ENCODE measurements at regions of chr6 and their contacts with region 1.

Region 1: DNA sequence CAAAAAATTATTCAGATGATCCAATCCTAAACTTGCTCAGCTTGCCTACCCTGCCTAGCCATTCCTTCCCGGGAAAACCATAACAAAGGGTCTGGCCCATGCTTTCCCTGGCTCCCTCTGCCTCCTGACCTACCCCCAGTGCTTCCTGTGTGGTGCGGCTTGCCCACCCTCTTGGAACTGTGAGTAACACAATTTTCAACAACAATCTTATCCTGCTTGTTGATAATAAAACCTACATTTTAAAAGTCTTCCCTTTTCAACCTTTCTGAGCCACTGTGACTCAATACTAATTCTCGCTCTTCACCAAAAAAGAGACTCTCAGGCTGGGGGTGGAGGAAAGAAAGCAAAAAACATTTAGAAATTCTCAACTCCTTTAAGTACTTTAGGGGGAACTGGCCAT is 18.0 kb downstream of the EXOC2 start:
- DNase-seq: no peak
- H3K4me3 ChIP-seq: no peak overlapping the region
- H3K27ac ChIP-seq: no peak overlapping the region
- H3K4me1 ChIP-seq: no peaks in the 10 kb centered on the region
- H3K27me3 ChIP-seq: no peaks in the 10 kb centered on the region
- CTCF ChIP-seq: no peak
- POLR2A ChIP-seq: no peak

Region 2: GRCh38 chr6:641225-641985 is 33.6 kb before region 1 on chr6:
- intact Hi-C with region 1: loop called (anchors 2 kb)
- DNase-seq: no peak
- H3K4me3 ChIP-seq: no peak overlapping the region
- H3K27ac ChIP-seq: no peak overlapping the region
- H3K4me1 ChIP-seq: no peaks in the 10 kb centered on the region
- H3K27me3 ChIP-seq: no peaks in the 10 kb centered on the region
- CTCF ChIP-seq: no peak
- POLR2A ChIP-seq: no peak

Region 3: GRCh38 chr6:710601-711571 is 35.9 kb after region 1 on chr6:
- intact Hi-C with region 1: no loop called
- DNase-seq: peak; percentile 34 to 57
- H3K4me3 ChIP-seq: peak overlapping the region; percentile 57 to 86 (median 64)
- H3K27ac ChIP-seq: peak overlapping the region; percentile 90 to 97
- H3K4me1 ChIP-seq: no peaks in the 10 kb centered on the region
- H3K27me3 ChIP-seq: no peaks in the 10 kb centered on the region
- CTCF ChIP-seq: no peak
- POLR2A ChIP-seq: no peak

Measured in breast epithelium (tissue), 4 donors.